ENCODE measurements at regions of chr16 and their contacts with region 1.

Region 1: GRCh38 chr16:30657866-30658730 is at the start of gene FBRS:
- DNase-seq: peak; percentile 100
- H3K4me3 Mint-ChIP-seq: peak within 1 kb of the TSS; percentile 99
- H3K27ac Mint-ChIP-seq: peak within 1 kb of the TSS; percentile 100
- H3K4me1 Mint-ChIP-seq: peaks cover 42% of the 10 kb centered on the region
- H3K27me3 Mint-ChIP-seq: no peaks in the 10 kb centered on the region
- total RNA-seq, gene FBRS: 83.8 to 84.8 TPM

Region 2: GRCh38 chr16:30091474-30092372 is 566.4 kb before region 1 on chr16 and contains the start of gene TBX6:
- CTCF ChIA-PET with region 1: no interaction called
- intact Hi-C with region 1: loop called (anchors 1 kb)
- DNase-seq: peak; percentile 95
- H3K4me3 Mint-ChIP-seq: peak within 1 kb of the TSS; percentile 86
- H3K27ac Mint-ChIP-seq: peak within 1 kb of the TSS; percentile 95
- H3K4me1 Mint-ChIP-seq: peaks cover 54% of the 10 kb centered on the region
- H3K27me3 Mint-ChIP-seq: no peaks in the 10 kb centered on the region
- total RNA-seq, gene TBX6: 3.6 to 4.7 TPM

Region 3: GRCh38 chr16:30472328-30472942 is 185.7 kb before region 1 on chr16 and contains the start of gene ITGAL:
- CTCF ChIA-PET with region 1: no interaction called
- intact Hi-C with region 1: loop called (anchors 1 kb)
- DNase-seq: peak; percentile 95
- H3K4me3 Mint-ChIP-seq: peak within 1 kb of the TSS; percentile 92
- H3K27ac Mint-ChIP-seq: peak within 1 kb of the TSS; percentile 92
- H3K4me1 Mint-ChIP-seq: peaks cover 70% of the 10 kb centered on the region
- H3K27me3 Mint-ChIP-seq: no peaks in the 10 kb centered on the region
- total RNA-seq, gene ITGAL: 83.8 to 89.0 TPM

Region 4: GRCh38 chr16:30588651-30589050 is 69.4 kb before region 1 on chr16:
- CTCF ChIA-PET with region 1: no interaction called
- intact Hi-C with region 1: no loop called
- DNase-seq: no peak
- H3K4me3 Mint-ChIP-seq: no peak overlapping the region
- H3K27ac Mint-ChIP-seq: no peak overlapping the region
- H3K4me1 Mint-ChIP-seq: peaks cover 20% of the 10 kb centered on the region
- H3K27me3 Mint-ChIP-seq: no peaks in the 10 kb centered on the region

Region 5: GRCh38 chr16:30628627-30629540 is 29.2 kb before region 1 on chr16:
- CTCF ChIA-PET with region 1: interaction called, 5 read pairs
- intact Hi-C with region 1: loop called (anchors 1 kb)
- DNase-seq: peak; percentile 97
- H3K4me3 Mint-ChIP-seq: peak overlapping the region; percentile 55
- H3K27ac Mint-ChIP-seq: peak overlapping the region; percentile 82
- H3K4me1 Mint-ChIP-seq: peaks cover 8% of the 10 kb centered on the region
- H3K27me3 Mint-ChIP-seq: no peaks in the 10 kb centered on the region

Region 6: GRCh38 chr16:30761928-30762810 is 104.1 kb after region 1 on chr16 and contains the starts of genes CFAP119 and RNF40:
- CTCF ChIA-PET with region 1: no interaction called
- intact Hi-C with region 1: loop called (anchors 1 kb)
- DNase-seq: peak; percentile 95
- H3K4me3 Mint-ChIP-seq: peak within 1 kb of the TSS; percentile 94
- H3K27ac Mint-ChIP-seq: peak within 1 kb of the TSS; percentile 87
- H3K4me1 Mint-ChIP-seq: peaks cover 25% of the 10 kb centered on the region
- H3K27me3 Mint-ChIP-seq: no peaks in the 10 kb centered on the region
- total RNA-seq, gene CFAP119: 2.0 to 2.3 TPM
- total RNA-seq, gene RNF40: 51.1 to 61.0 TPM

Region 7: DNA sequence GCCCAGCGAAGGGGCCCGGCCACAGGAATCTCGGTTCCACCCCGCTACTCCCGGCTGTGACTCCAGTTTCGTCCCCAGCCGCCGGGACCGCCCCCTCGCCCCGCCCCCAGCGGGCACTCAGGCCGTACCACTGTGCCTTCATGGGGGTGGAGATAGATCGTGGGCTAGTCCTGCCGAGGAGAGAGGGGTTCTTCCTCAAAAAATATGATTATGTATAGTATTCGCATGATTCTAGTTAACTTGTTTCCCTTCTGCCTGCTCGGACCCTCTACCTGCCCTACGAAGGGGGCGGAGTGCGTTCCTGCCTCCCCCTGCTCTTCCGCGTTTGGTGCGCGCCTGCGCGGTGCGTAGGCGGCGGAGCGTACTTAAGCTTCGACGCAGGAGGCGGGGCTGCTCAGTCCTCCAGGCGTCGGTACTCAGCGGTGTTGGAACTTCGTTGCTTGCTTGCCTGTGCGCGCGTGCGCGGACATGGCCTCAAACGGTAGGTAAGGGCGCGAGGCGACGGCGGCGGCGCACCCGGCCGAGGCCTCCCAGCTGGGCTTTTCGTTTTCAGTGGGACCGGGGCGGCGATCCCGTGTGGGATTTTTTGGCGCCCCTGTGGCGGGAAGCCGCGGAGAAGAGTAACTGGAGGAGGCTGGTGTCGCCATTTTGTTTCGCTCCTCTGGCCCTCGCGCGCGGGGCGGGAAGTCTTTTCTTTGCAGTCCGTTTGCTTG is 521.8 kb after region 1 on chr16 and contains the start of gene FUS:
- CTCF ChIA-PET with region 1: no interaction called
- intact Hi-C with region 1: loop called (anchors 2 kb)
- DNase-seq: peak; percentile 92
- H3K4me3 Mint-ChIP-seq: peak within 1 kb of the TSS; percentile 99
- H3K27ac Mint-ChIP-seq: peak within 1 kb of the TSS; percentile 100
- H3K4me1 Mint-ChIP-seq: peaks cover 51% of the 10 kb centered on the region
- H3K27me3 Mint-ChIP-seq: no peaks in the 10 kb centered on the region
- total RNA-seq, gene FUS: 424 to 435 TPM

Region 8: GRCh38 chr16:31215287-31216162 is 557.4 kb after region 1 on chr16:
- CTCF ChIA-PET with region 1: no interaction called
- intact Hi-C with region 1: no loop called
- DNase-seq: peak; percentile 40
- H3K4me3 Mint-ChIP-seq: peak overlapping the region; percentile 61
- H3K27ac Mint-ChIP-seq: no peak overlapping the region
- H3K4me1 Mint-ChIP-seq: peaks cover 22% of the 10 kb centered on the region
- H3K27me3 Mint-ChIP-seq: peaks cover 45% of the 10 kb centered on the region

Measured in activated naive CD4-positive, alpha-beta T cell treated with anti-CD3 and anti-CD28 coated beads for 36 hours (primary cell).